Ascending aorta (tissue), 2 donors: ENCODE measurements at regions of chr19 and their contacts with region 1.

Region 1: GRCh38 chr19:33176670-33177416 is 17.3 kb upstream of the LRP3 start:
- DNase-seq: peak; percentile 93 to 99
- H3K4me3 ChIP-seq: peak overlapping the region; percentile 65 to 76
- H3K27ac ChIP-seq: peak overlapping the region; percentile 91 to 95
- H3K4me1 ChIP-seq: peaks cover 7 to 8% of the 10 kb centered on the region in 2 donors
- H3K27me3 ChIP-seq: no peaks in the 10 kb centered on the region
- CTCF ChIP-seq: no peak

Region 2: DNA sequence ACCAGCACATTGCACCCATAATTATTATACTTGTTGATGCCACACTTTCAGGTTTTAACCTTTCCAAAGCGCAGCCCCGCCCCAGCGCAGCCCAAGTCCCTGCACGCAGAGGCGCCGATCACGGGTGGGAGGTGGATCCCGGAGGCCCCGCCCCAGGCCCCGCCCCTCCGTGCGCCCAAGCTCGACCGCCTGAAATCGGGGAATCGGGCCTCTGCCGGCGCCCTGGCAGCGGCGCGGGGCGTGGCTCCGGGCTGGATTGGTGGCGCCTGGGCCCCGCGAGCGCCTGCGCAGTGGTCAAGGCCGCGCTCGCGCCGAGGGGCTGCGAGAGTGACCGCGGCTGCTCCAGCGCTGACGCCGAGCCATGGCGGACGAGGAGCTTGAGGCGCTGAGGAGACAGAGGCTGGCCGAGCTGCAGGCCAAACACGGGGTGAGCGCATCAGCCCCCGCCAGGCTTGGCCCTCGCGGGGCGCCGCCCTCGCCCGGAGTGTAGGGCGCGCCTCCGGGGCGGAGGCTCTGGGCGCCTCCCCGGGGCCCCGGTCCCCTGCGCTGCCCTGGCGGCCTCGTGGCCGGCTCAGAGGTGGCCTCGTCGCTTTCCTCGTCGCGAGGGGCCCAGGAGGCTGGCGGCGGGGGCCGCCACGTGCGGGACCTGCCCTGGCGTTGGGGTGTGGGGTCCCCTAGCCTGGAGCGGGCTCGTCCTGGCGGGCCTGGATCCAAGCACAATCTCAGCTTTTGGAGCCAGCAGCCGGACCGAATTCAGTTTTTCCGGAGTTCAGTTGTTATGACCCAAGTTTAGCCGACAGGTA is 595.7 kb before region 1 on chr19 and contains the start of gene PDCD5:
- intact Hi-C with region 1: loop called (anchors 10 kb)
- DNase-seq: peak; percentile 86 to 98
- H3K4me3 ChIP-seq: peak within 1 kb of the TSS; percentile 86 to 88
- H3K27ac ChIP-seq: peak within 1 kb of the TSS; percentile 76 to 81
- H3K4me1 ChIP-seq: peaks cover 0 to 5% of the 10 kb centered on the region in 2 donors
- H3K27me3 ChIP-seq: no peaks in the 10 kb centered on the region
- CTCF ChIP-seq: no peak
- total RNA-seq, gene PDCD5: 36.6 TPM

Region 3: GRCh38 chr19:32691291-32691951 is 485.4 kb before region 1 on chr19 and contains the start of gene NUDT19:
- intact Hi-C with region 1: loop called (anchors 5 kb)
- DNase-seq: peak; percentile 51 to 91
- H3K4me3 ChIP-seq: peak within 1 kb of the TSS; percentile 82 to 95
- H3K27ac ChIP-seq: peak within 1 kb of the TSS; percentile 61 to 86
- H3K4me1 ChIP-seq: peaks cover 10 to 15% of the 10 kb centered on the region in 2 donors
- H3K27me3 ChIP-seq: no peaks in the 10 kb centered on the region
- CTCF ChIP-seq: no peak
- total RNA-seq, gene NUDT19: 6.2 TPM

Region 4: GRCh38 chr19:33080761-33081681 is 95.8 kb before region 1 on chr19 and contains the start of gene GPATCH1:
- intact Hi-C with region 1: loop called (anchors 2 kb)
- DNase-seq: peak; percentile 41 to 93
- H3K4me3 ChIP-seq: peak within 1 kb of the TSS; percentile 87 to 96
- H3K27ac ChIP-seq: peak within 1 kb of the TSS; percentile 70 to 71
- H3K4me1 ChIP-seq: peaks cover 3 to 8% of the 10 kb centered on the region in 2 donors
- H3K27me3 ChIP-seq: no peaks in the 10 kb centered on the region
- CTCF ChIP-seq: no peak
- total RNA-seq, gene GPATCH1: 4.4 TPM

Region 5: GRCh38 chr19:33110137-33110910 is 66.5 kb before region 1 on chr19:
- intact Hi-C with region 1: no loop called
- DNase-seq: no peak
- H3K4me3 ChIP-seq: no peak overlapping the region
- H3K27ac ChIP-seq: no peak overlapping the region
- H3K4me1 ChIP-seq: no peaks in the 10 kb centered on the region
- H3K27me3 ChIP-seq: no peaks in the 10 kb centered on the region
- CTCF ChIP-seq: no peak

Region 6: GRCh38 chr19:33193865-33194362 is 17.1 kb after region 1 on chr19 and contains the start of gene LRP3:
- intact Hi-C with region 1: no loop called
- DNase-seq: no peak
- H3K4me3 ChIP-seq: peak within 1 kb of the TSS; percentile 76 to 91
- H3K27ac ChIP-seq: peak within 1 kb of the TSS; percentile 33 to 44
- H3K4me1 ChIP-seq: peaks cover 0 to 10% of the 10 kb centered on the region in 2 donors
- H3K27me3 ChIP-seq: no peaks in the 10 kb centered on the region
- CTCF ChIP-seq: no peak
- total RNA-seq, gene LRP3: 28.8 TPM

Region 7: GRCh38 chr19:33521480-33522370 is 344.9 kb after region 1 on chr19 and contains the start of gene PEPD:
- intact Hi-C with region 1: loop called (anchors 1 kb)
- DNase-seq: peak; percentile 60 to 95
- H3K4me3 ChIP-seq: peak within 1 kb of the TSS; percentile 60 to 89
- H3K27ac ChIP-seq: peak within 1 kb of the TSS in 1 of 2 donors; percentile 4
- H3K4me1 ChIP-seq: peaks cover 4 to 7% of the 10 kb centered on the region in 2 donors
- H3K27me3 ChIP-seq: no peaks in the 10 kb centered on the region
- CTCF ChIP-seq: no peak
- total RNA-seq, gene PEPD: 112 TPM